ENCODE measurements at regions of chr2 and their contacts with region 1.

Region 1: DNA sequence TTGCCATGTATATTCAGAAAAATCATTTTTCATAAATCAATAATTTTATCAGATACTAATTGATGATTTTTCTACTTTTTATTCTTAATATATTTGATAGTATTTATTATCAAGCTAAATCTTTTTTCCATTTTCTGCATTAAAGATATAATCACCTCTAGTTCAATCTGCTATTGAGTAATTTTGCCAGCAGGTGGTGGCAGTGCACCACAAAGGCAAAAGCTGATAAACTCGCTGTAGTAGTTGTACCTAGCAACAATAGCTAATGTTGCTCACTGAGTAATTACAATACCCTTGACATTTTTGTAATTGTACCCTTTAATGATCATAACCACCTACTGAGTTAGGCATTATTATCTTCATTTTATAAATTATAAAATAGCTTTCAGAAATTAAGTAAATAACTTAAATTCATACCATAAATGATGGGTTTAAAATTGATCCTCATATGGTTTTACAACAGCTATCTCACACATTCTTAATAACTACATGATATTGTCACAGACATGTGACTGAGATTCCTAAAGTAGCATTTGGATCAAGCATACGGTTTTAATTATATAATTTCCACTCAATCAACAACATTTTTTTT is 52.0 kb upstream of the CALCRL start:
- DNase-seq: peak in 3 of 5 donors; percentile 46 to 77 (median 72)
- H3K4me3 ChIP-seq: no peak overlapping the region
- H3K27ac ChIP-seq: no peak overlapping the region
- H3K4me1 ChIP-seq: no peaks in the 10 kb centered on the region
- H3K27me3 ChIP-seq: no peaks in the 10 kb centered on the region
- CTCF ChIP-seq: peak; percentile 92

Region 2: DNA sequence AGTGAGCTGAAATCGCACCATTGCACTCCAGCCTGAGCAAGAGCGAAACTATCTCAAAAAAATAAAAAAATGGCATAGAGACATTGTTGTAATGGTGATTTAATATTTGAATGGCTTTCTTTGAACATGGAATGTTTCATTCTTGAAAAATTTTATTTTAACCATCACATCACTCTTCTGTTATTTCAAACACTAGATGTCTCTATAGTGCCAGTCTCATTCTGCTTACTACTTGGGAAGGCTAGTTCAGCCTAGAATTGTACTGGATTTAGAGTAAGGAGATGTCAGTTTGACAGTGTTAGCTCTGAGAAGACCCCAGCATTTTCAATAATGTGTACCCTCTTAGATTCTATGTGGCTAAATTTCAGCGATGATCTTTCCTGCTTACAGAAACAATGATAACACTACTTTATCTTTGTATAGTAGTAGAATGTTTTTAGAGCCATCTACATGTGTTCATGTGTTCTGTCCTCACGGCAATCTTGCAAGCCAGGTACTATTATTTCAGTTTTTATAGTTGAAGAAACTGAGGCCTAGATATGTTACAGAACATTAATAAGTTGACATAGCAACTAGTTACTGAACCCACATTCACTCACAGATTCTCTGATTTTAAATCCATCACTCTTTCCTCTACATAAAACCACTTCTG is 508.1 kb before region 1 on chr2:
- intact Hi-C with region 1: no loop called
- DNase-seq: peak in 1 of 5 donors; percentile 30
- H3K4me3 ChIP-seq: no peak overlapping the region
- H3K27ac ChIP-seq: no peak overlapping the region
- H3K4me1 ChIP-seq: no peaks in the 10 kb centered on the region
- H3K27me3 ChIP-seq: no peaks in the 10 kb centered on the region
- CTCF ChIP-seq: no peak

Region 3: GRCh38 chr2:187168720-187169713 is 331.0 kb before region 1 on chr2:
- intact Hi-C with region 1: no loop called
- DNase-seq: peak in 1 of 5 donors; percentile 39
- H3K4me3 ChIP-seq: no peak overlapping the region
- H3K27ac ChIP-seq: no peak overlapping the region
- H3K4me1 ChIP-seq: no peaks in the 10 kb centered on the region
- H3K27me3 ChIP-seq: no peaks in the 10 kb centered on the region
- CTCF ChIP-seq: no peak

Region 4: GRCh38 chr2:187574969-187575750 is 75.1 kb after region 1 on chr2:
- intact Hi-C with region 1: loop called (anchors 10 kb)
- DNase-seq: peak in 1 of 5 donors; percentile 12
- H3K4me3 ChIP-seq: no peak overlapping the region
- H3K27ac ChIP-seq: peak overlapping the region in 1 of 2 donors; percentile 11
- H3K4me1 ChIP-seq: no peaks in the 10 kb centered on the region
- H3K27me3 ChIP-seq: no peaks in the 10 kb centered on the region
- CTCF ChIP-seq: no peak

Region 5: GRCh38 chr2:188512456-188512855 is 1012.4 kb after region 1 on chr2:
- intact Hi-C with region 1: loop called (anchors 10 kb)
- DNase-seq: peak in 2 of 5 donors; percentile 63 to 80
- H3K4me3 ChIP-seq: no peak overlapping the region
- H3K27ac ChIP-seq: no peak overlapping the region
- H3K4me1 ChIP-seq: peaks cover 0 to 3% (median 0%) of the 10 kb centered on the region in 3 donors
- H3K27me3 ChIP-seq: no peaks in the 10 kb centered on the region
- CTCF ChIP-seq: peak; percentile 50

Region 6: DNA sequence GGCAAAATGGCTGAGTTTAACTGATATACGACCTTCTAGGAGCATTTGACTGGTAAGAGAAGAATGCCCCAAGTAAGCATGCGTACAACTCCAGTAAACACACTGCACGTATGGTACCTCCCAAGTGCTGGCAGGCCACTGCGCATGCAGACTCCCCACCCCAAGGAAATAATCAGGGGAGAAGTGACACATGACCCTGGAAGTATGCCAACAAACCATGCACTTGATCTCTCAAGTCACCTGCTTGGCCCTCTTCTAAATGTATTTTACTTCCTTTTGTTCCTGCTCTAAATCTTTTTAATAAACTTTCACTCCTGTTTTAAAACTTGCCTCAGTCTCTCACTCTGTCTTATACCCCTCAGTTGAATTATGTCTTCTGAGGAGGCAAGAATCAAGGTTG is 1809.3 kb after region 1 on chr2:
- intact Hi-C with region 1: no loop called
- DNase-seq: no peak
- H3K4me3 ChIP-seq: no peak overlapping the region
- H3K27ac ChIP-seq: no peak overlapping the region
- H3K4me1 ChIP-seq: no peaks in the 10 kb centered on the region
- H3K27me3 ChIP-seq: no peaks in the 10 kb centered on the region
- CTCF ChIP-seq: no peak